Sciatic nerve (tissue), 2 donors: ENCODE measurements at regions of chr16 and their contacts with region 1.

Region 1: DNA sequence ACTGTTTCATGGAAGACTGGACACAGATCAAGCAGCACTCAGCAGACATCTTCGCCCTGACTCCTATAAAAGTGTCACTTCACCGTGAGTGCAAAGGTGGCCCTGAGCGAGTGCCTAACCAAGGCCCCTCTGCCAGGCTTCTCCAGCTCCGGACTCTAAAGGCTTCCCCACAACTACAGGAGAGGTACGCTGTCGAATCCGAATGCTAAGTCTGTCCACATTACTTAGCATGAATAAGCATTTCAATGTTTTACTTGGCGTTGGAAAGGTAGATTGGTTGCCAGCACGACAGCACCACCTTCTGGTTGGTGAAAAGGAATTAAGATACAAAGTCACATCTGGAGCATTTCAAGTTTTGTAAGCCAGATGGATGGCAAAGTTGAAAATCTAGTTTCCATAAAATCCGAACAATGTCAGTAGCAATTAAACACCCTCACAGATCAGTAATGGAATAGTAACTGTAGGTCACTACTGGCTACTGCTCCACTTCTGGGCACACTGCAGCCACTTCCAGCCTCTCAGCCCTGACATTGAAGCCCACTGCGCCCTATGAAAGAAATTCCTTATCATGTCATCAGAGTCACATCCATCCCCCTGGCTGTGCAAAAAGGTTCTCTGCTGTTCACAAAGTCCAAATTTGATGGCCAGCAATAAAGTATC is 100.9 kb downstream of the PARN start:
- DNase-seq: peak; percentile 82
- ATAC-seq: peak; percentile 88

Region 2: GRCh38 chr16:12826559-12826958 is 1702.6 kb before region 1 on chr16:
- intact Hi-C with region 1: loop called (anchors 5 kb)
- DNase-seq: no peak
- ATAC-seq: no peak

Region 3: GRCh38 chr16:13811834-13812233 is 717.3 kb before region 1 on chr16:
- intact Hi-C with region 1: no loop called
- DNase-seq: no peak
- ATAC-seq: no peak